Heart right ventricle (tissue), 16 donors: ENCODE measurements at regions of chr5 and their contacts with region 1.

Region 1: GRCh38 chr5:173972925-173973615 is 15.9 kb upstream of the C5orf47 start:
- DNase-seq: peak; percentile 73 to 86
- ATAC-seq: peak; percentile 67 to 93 (median 87)
- H3K4me3 ChIP-seq: peak overlapping the region; percentile 16 to 59 (median 52)
- H3K27ac ChIP-seq: peak overlapping the region in 8 of 10 donors; percentile 1 to 80 (median 40)
- H3K4me1 ChIP-seq: peaks cover 0 to 21% (median 10%) of the 10 kb centered on the region in 9 donors
- H3K27me3 ChIP-seq: peaks cover 0 to 11% (median 0%) of the 10 kb centered on the region in 7 donors
- CTCF ChIP-seq: peak; percentile 66 to 93 (median 90)

Region 2: GRCh38 chr5:173592050-173592669 is 380.9 kb before region 1 on chr5:
- intact Hi-C with region 1: no loop called
- DNase-seq: no peak
- ATAC-seq: no peak
- H3K4me3 ChIP-seq: no peak overlapping the region
- H3K27ac ChIP-seq: no peak overlapping the region
- H3K4me1 ChIP-seq: peaks cover 0 to 9% (median 0%) of the 10 kb centered on the region in 9 donors
- H3K27me3 ChIP-seq: no peaks in the 10 kb centered on the region
- CTCF ChIP-seq: peak in 7 of 9 donors; percentile 20 to 45 (median 35)

Region 3: DNA sequence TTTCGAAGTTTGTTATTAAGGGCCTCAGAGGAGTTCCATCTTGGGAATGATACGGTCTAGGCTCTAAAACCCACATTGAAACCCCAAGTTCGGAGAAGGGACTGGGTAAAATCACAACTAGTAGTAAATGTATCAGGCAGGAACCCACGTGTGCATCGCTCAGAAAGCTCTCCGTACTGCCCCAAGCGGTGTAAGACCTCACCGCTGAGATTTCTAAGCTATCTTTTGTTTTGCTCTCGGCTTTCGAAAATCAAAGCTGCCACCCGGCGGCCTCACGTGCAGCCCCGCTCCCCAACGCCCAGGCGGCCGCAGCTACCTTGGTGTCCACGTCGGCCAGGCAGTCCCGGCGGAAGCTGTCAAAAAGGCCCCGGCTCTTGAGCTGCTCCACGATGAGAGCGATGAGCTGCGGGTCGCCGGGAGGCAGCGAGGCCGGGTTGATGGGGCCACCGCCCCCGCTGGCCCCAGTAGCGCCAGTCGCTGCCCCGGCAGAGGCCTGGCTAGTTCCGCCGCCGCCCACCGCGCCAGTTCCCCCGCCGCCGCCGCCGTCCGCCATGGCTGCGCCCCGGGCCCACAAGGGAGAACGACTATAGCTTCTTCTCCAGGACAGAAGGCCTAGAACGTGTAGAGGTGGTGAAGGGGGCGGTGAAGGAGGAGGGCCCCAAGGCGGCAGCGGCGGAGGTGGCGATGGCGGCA is 357.0 kb before region 1 on chr5:
- intact Hi-C with region 1: loop called (anchors 1 to 5 kb)
- DNase-seq: peak; percentile 43 to 52
- ATAC-seq: peak; percentile 45 to 75 (median 68)
- H3K4me3 ChIP-seq: peak overlapping the region; percentile 62 to 99 (median 96)
- H3K27ac ChIP-seq: peak overlapping the region; percentile 88 to 98 (median 94)
- H3K4me1 ChIP-seq: peaks cover 0 to 59% (median 49%) of the 10 kb centered on the region in 9 donors
- H3K27me3 ChIP-seq: no peaks in the 10 kb centered on the region
- CTCF ChIP-seq: peak in 8 of 9 donors; percentile 34 to 78 (median 64)

Region 4: DNA sequence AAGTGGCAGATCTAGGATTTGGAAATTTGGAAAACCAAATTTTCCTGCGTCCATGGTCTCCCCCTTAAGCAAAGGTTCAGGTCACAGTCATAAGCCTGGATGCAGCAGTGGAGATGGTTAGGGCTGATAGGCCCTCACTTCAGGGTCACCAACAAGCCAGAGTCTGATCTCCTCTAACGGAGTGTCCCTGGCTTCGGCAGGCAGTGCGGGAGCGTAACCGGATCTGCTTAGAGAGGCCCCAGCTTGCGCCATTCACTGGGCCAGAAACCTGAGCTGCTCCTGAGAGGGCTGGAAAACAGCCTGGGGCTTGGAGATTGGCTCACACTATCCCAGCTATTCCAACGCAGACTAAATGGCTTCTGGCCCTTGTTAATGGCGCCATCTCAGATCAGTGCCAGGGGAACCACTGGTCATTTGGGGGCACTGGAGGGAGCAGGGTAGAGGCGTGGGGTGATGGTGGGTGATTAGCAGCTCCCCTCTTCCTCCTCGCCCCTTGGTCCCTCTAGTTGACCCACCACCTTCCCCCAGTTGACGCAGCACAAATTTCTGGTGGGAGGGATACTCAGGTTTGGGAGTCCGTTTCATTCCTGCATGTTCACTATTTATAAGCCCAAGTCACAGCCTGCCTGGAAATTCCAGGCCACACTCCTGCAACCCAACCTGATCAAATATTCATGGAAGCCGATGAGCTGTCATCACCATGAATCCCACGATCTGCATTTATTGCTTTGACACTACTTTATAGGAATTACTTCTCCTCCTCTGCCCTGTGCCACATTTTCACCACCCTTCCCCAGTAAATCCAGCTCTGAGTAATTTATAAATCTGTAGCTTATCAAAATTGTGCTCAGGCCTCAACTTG is 219.5 kb before region 1 on chr5:
- intact Hi-C with region 1: loop called in 2 of 10 experiments (anchors 2 to 10 kb)
- DNase-seq: peak; percentile 58 to 60
- ATAC-seq: peak; percentile 80 to 93 (median 90)
- H3K4me3 ChIP-seq: no peak overlapping the region
- H3K27ac ChIP-seq: peak overlapping the region; percentile 35 to 77 (median 60)
- H3K4me1 ChIP-seq: peaks cover 0 to 28% (median 0%) of the 10 kb centered on the region in 9 donors
- H3K27me3 ChIP-seq: no peaks in the 10 kb centered on the region
- CTCF ChIP-seq: no peak

Region 5: GRCh38 chr5:173772384-173773059 is 200.5 kb before region 1 on chr5:
- intact Hi-C with region 1: loop called in 4 of 10 experiments (anchors 5 to 10 kb)
- DNase-seq: no peak
- ATAC-seq: no peak
- H3K4me3 ChIP-seq: no peak overlapping the region
- H3K27ac ChIP-seq: peak overlapping the region in 6 of 10 donors; percentile 4 to 86 (median 50)
- H3K4me1 ChIP-seq: peaks cover 0 to 39% (median 1%) of the 10 kb centered on the region in 9 donors
- H3K27me3 ChIP-seq: no peaks in the 10 kb centered on the region
- CTCF ChIP-seq: no peak